ENCODE measurements at regions of chr19 and their contacts with region 1.

Region 1: DNA sequence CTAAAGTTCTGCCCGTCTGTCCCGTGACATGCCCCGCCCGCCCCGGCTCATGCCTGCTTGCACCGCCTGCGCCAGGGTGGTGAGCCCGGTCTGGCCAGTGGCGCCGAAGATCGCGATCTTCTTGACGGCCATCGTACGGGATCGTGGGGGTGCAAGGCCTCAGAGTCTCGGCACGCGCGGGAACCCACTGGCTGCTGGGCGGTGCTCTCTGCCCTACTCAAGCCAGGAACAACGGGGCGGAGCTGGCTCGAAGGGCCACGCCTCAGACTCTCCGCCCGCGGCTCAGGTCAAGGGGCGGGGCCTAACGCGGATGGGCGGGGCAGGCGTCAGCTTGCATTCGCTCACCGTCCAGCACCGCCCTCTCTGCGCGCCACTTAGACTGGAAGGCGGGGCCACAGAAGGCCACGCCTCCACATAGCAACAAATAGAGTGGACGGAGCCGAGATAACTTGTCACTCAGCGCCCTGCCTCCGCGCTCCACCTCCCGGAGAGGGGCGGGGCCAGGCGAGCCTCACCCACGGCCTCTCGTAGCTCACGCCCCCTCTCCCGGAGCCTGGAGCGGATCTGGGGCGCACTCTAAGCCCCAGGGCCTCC is at the start of gene BLVRB:
- DNase-seq: peak; percentile 98 to 99 (median 99)
- H3K4me3 ChIP-seq: peak within 1 kb of the TSS; percentile 67 to 72
- H3K4me3 Mint-ChIP-seq: peak within 1 kb of the TSS; percentile 85 to 96 (median 86)
- H3K27ac ChIP-seq: peak within 1 kb of the TSS; percentile 52
- H3K27ac Mint-ChIP-seq: peak within 1 kb of the TSS; percentile 79 to 98 (median 95)
- H3K4me1 ChIP-seq: peaks cover 28% of the 10 kb centered on the region
- H3K4me1 Mint-ChIP-seq: peaks cover 22 to 31% (median 24%) of the 10 kb centered on the region in 4 donors
- H3K27me3 ChIP-seq: no peaks in the 10 kb centered on the region
- H3K27me3 Mint-ChIP-seq: peaks cover 6 to 20% of the 10 kb centered on the region in 2 donors
- total RNA-seq, gene BLVRB: 12.3 to 16.3 TPM

Region 2: DNA sequence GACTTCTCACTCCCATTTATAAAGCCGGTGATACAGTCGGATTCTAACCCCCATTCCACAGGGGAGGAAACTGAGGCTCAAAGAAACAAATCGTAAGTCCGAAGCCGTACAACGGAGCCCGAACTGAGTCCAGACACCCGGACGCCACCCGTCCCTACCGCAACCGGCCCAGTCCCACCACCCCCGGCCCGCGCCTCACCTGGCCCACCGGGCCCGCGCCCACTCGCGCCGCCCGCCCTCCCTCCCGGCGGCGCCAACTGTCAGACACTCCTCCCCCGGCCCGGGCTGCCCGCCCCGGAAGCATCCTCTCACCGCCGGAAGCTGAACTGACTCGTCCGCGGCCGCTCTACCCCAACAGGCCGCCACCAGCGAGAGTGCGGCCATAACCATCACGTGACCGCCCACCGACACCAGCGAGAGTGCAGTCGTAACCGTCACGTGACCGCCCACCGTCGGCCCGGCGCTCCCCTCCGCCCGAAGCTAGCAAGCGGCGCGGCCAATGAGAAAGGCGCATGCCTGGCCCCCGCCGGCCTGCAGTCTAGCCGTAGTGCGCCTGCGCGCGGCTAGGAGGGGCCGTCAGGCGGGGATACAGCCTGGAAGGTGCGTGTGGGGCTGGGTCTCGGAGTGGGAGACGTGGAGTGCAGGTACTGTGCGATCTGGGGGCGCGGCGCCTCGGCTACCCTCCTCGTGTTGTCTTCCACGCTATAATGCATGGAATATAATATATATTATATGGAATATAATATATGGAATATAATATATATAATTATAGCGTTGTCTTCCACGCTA is 117.3 kb before region 1 on chr19 and contains the starts of genes C19orf47 and PLD3:
- CTCF ChIA-PET with region 1: interaction called, 9 read pairs
- POLR2A ChIA-PET with region 1: interaction called, 11 read pairs
- intact Hi-C with region 1: loop called (anchors 1 kb)
- DNase-seq: peak; percentile 97 to 99 (median 99)
- H3K4me3 ChIP-seq: peak within 1 kb of the TSS; percentile 48 to 73
- H3K4me3 Mint-ChIP-seq: peak within 1 kb of the TSS; percentile 85 to 99 (median 94)
- H3K27ac ChIP-seq: peak within 1 kb of the TSS; percentile 84
- H3K27ac Mint-ChIP-seq: peak within 1 kb of the TSS; percentile 86 to 99 (median 95)
- H3K4me1 ChIP-seq: peaks cover 19% of the 10 kb centered on the region
- H3K4me1 Mint-ChIP-seq: peaks cover 27 to 44% (median 33%) of the 10 kb centered on the region in 4 donors
- H3K27me3 ChIP-seq: no peaks in the 10 kb centered on the region
- H3K27me3 Mint-ChIP-seq: no peaks in the 10 kb centered on the region
- total RNA-seq, gene C19orf47: 13.7 to 17.7 TPM
- total RNA-seq, gene PLD3: 116 to 117 TPM

Region 3: GRCh38 chr19:40387155-40387554 is 78.5 kb before region 1 on chr19:
- CTCF ChIA-PET with region 1: no interaction called
- POLR2A ChIA-PET with region 1: no interaction called
- intact Hi-C with region 1: no loop called
- DNase-seq: no peak
- H3K4me3 ChIP-seq: no peak overlapping the region
- H3K4me3 Mint-ChIP-seq: no peak overlapping the region
- H3K27ac ChIP-seq: no peak overlapping the region
- H3K27ac Mint-ChIP-seq: peak overlapping the region in 1 of 7 donors; percentile 15
- H3K4me1 ChIP-seq: no peaks in the 10 kb centered on the region
- H3K4me1 Mint-ChIP-seq: no peaks in the 10 kb centered on the region
- H3K27me3 ChIP-seq: no peaks in the 10 kb centered on the region
- H3K27me3 Mint-ChIP-seq: no peaks in the 10 kb centered on the region

Region 4: DNA sequence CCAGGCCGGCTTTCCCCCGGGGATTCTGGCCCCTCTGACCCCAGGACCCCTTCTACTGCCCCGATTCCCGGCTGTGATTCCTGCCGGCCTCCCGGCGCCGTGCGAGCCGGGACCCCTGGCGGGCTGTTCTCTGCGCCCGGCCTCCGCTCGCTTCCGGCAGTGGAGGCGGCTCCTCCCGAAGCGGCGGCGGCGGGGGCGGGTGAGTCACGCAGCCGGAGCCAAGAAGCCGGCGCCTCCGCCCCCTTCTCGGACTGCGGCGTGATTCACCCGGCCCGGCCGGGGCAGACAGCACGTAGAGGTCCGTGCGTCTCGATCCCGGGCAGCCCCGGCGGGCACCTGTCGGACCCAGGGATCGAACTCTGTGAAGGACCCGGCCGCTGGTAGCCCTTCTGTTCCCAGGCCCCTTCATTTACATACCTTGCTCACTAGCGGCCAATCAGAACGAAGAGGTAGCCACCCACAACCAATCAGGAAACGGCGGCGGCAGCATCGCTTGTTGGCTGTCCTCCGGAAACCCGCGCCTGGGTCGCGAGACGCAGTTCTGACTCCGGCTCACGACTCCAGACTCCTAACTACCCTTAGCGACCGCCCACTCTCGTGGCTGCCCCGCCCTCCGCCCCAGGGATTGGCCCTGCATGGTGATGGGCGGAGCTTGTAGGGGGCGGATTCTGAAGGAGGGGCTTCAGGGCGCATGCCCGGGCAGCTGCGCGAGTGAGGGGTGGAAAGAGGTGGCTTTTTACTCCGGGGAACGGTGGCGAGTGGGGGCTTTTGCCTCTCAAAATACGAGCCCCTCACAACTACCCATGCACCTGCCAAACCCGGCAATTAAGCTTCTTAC is 40.0 kb before region 1 on chr19 and contains the start of gene SERTAD1:
- CTCF ChIA-PET with region 1: interaction called, 66 read pairs
- POLR2A ChIA-PET with region 1: interaction called, 39 read pairs
- intact Hi-C with region 1: loop called (anchors 1 kb)
- DNase-seq: peak; percentile 100
- H3K4me3 ChIP-seq: peak within 1 kb of the TSS; percentile 79 to 85
- H3K4me3 Mint-ChIP-seq: peak within 1 kb of the TSS; percentile 92 to 99 (median 95)
- H3K27ac ChIP-seq: peak within 1 kb of the TSS; percentile 92
- H3K27ac Mint-ChIP-seq: peak within 1 kb of the TSS; percentile 97 to 99 (median 98)
- H3K4me1 ChIP-seq: peaks cover 28% of the 10 kb centered on the region
- H3K4me1 Mint-ChIP-seq: peaks cover 11 to 34% (median 22%) of the 10 kb centered on the region in 4 donors
- H3K27me3 ChIP-seq: no peaks in the 10 kb centered on the region
- H3K27me3 Mint-ChIP-seq: peaks cover 0 to 2% of the 10 kb centered on the region in 2 donors
- total RNA-seq, gene SERTAD1: 10.6 to 11.3 TPM

Region 5: DNA sequence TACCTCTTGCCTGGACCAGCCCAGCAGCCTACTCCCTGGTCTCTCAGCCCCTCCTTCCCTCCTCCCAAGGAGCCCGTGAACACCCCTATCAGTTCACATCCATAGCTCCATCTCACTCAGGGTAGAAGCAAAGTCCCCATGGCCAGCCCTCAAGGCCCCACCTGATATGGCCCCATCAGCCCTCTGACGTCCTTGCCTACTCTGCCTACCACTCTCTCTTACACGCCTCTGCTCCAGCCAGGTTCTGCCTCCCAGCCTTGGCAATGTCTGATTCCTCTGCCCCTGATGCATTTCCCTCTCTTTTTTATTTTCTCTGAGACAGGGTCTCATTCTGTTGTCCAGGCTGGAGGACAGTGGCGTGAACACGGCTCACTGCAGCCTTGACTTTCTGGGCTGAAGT is 13.6 kb before region 1 on chr19:
- CTCF ChIA-PET with region 1: interaction called, 45 read pairs
- POLR2A ChIA-PET with region 1: interaction called, 4 read pairs
- intact Hi-C with region 1: no loop called
- DNase-seq: no peak
- H3K4me3 ChIP-seq: no peak overlapping the region
- H3K4me3 Mint-ChIP-seq: no peak overlapping the region
- H3K27ac ChIP-seq: no peak overlapping the region
- H3K27ac Mint-ChIP-seq: peak overlapping the region in 2 of 7 donors; percentile 29 to 57
- H3K4me1 ChIP-seq: no peaks in the 10 kb centered on the region
- H3K4me1 Mint-ChIP-seq: peaks cover 0 to 1% (median 0%) of the 10 kb centered on the region in 4 donors
- H3K27me3 ChIP-seq: no peaks in the 10 kb centered on the region
- H3K27me3 Mint-ChIP-seq: no peaks in the 10 kb centered on the region

Region 6: GRCh38 chr19:40570313-40571004 is 104.8 kb after region 1 on chr19:
- CTCF ChIA-PET with region 1: interaction called, 10 read pairs
- POLR2A ChIA-PET with region 1: interaction called, 5 read pairs
- intact Hi-C with region 1: no loop called
- DNase-seq: peak; percentile 95 to 98 (median 98)
- H3K4me3 ChIP-seq: peak overlapping the region; percentile 17 to 61
- H3K4me3 Mint-ChIP-seq: peak overlapping the region; percentile 65 to 88 (median 82)
- H3K27ac ChIP-seq: no peak overlapping the region
- H3K27ac Mint-ChIP-seq: peak overlapping the region; percentile 30 to 94 (median 91)
- H3K4me1 ChIP-seq: peaks cover 14% of the 10 kb centered on the region
- H3K4me1 Mint-ChIP-seq: peaks cover 8 to 26% (median 16%) of the 10 kb centered on the region in 4 donors
- H3K27me3 ChIP-seq: no peaks in the 10 kb centered on the region
- H3K27me3 Mint-ChIP-seq: peaks cover 5 to 7% of the 10 kb centered on the region in 2 donors

Region 7: GRCh38 chr19:40603389-40604135 is 137.9 kb after region 1 on chr19:
- CTCF ChIA-PET with region 1: interaction called, 18 read pairs
- POLR2A ChIA-PET with region 1: interaction called, 38 read pairs
- intact Hi-C with region 1: loop called (anchors 2 kb)
- DNase-seq: peak; percentile 94 to 99 (median 98)
- H3K4me3 ChIP-seq: peak overlapping the region in 1 of 2 donors; percentile 59
- H3K4me3 Mint-ChIP-seq: peak overlapping the region; percentile 80 to 97 (median 90)
- H3K27ac ChIP-seq: peak overlapping the region; percentile 61
- H3K27ac Mint-ChIP-seq: peak overlapping the region; percentile 96 to 99 (median 97)
- H3K4me1 ChIP-seq: peaks cover 84% of the 10 kb centered on the region
- H3K4me1 Mint-ChIP-seq: peaks cover 39 to 91% (median 64%) of the 10 kb centered on the region in 4 donors
- H3K27me3 ChIP-seq: peaks cover 14% of the 10 kb centered on the region
- H3K27me3 Mint-ChIP-seq: peaks cover 9 to 20% of the 10 kb centered on the region in 2 donors

Region 8: GRCh38 chr19:40640744-40641143 is 175.1 kb after region 1 on chr19:
- CTCF ChIA-PET with region 1: interaction called, 39 read pairs
- POLR2A ChIA-PET with region 1: no interaction called
- intact Hi-C with region 1: no loop called
- DNase-seq: no peak
- H3K4me3 ChIP-seq: no peak overlapping the region
- H3K4me3 Mint-ChIP-seq: no peak overlapping the region
- H3K27ac ChIP-seq: no peak overlapping the region
- H3K27ac Mint-ChIP-seq: peak overlapping the region in 1 of 7 donors; percentile 61
- H3K4me1 ChIP-seq: no peaks in the 10 kb centered on the region
- H3K4me1 Mint-ChIP-seq: peaks cover 0 to 3% (median 2%) of the 10 kb centered on the region in 4 donors
- H3K27me3 ChIP-seq: no peaks in the 10 kb centered on the region
- H3K27me3 Mint-ChIP-seq: peaks cover 2 to 4% of the 10 kb centered on the region in 2 donors

Measured in CD4-positive, alpha-beta memory T cell (primary cell).